PC-9 (cell line): ENCODE measurements at regions of chr4 and their contacts with region 1.

Region 1: GRCh38 chr4:136927172-136927571 is 605.1 kb downstream of the PCDH18 start:
- DNase-seq: peak; percentile 33 to 35
- H3K4me3 ChIP-seq: no peak overlapping the region
- H3K27ac ChIP-seq: no peak overlapping the region
- H3K4me1 ChIP-seq: no peaks in the 10 kb centered on the region
- H3K27me3 ChIP-seq: no peaks in the 10 kb centered on the region
- CTCF ChIP-seq: no peak

Region 2: GRCh38 chr4:136900696-136901095 is 26.5 kb before region 1 on chr4:
- CTCF ChIA-PET with region 1: no interaction called
- POLR2A ChIA-PET with region 1: no interaction called
- intact Hi-C with region 1: loop called (anchors 1 kb)
- DNase-seq: no peak
- H3K4me3 ChIP-seq: no peak overlapping the region
- H3K27ac ChIP-seq: no peak overlapping the region
- H3K4me1 ChIP-seq: no peaks in the 10 kb centered on the region
- H3K27me3 ChIP-seq: no peaks in the 10 kb centered on the region
- CTCF ChIP-seq: no peak